ENCODE measurements at regions of chr20 and their contacts with region 1.

Region 1: DNA sequence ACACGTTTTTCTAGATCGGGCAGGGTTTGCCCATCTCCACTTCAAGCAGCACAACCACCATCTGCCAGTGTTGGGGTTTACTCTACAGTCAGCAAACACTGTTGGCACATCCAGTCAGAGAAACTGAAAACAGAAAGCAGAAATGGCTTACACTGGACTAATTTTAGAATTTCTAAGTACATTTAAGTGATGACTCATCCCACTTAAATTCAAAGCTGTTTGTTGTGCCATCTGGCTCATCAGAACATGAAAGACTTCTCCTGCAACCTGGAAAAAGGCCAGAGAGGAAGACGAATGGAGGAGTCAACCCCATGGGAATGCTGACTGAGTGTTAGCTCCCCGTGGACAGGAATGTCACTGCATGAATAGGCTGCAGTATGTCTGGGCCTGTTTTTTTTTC is 21.8 kb downstream of the FAM209B start:
- DNase-seq: peak; percentile 88
- H3K4me3 ChIP-seq: no peak overlapping the region
- H3K27me3 ChIP-seq: peaks cover 3% of the 10 kb centered on the region
- CTCF ChIP-seq: peak; percentile 28; the same call in 1 of the 2 replicates

Region 2: DNA sequence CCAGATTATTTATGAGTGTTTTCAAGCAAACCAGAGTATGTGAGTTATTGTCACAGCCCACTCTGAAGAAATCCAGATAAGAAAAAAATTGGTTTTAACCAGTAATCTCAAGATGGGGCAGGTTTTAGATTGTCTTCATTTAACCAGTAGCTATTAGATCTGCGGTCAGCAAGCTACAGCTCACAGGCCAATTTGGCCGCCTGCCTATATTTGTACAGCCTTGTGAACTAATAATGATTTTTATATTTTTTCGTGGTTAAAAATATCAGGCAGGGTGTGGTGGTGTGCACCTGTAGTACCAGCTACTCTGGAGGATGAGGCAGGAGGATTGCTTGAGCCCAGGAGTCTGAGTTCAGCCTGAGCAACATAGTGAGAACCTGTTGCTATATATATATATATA is 16.9 kb before region 1 on chr20:
- CTCF ChIA-PET with region 1: interaction called, 17 read pairs
- POLR2A ChIA-PET with region 1: no interaction called
- DNase-seq: no peak
- H3K4me3 ChIP-seq: no peak overlapping the region
- H3K27me3 ChIP-seq: no peaks in the 10 kb centered on the region
- CTCF ChIP-seq: no peak

Region 3: DNA sequence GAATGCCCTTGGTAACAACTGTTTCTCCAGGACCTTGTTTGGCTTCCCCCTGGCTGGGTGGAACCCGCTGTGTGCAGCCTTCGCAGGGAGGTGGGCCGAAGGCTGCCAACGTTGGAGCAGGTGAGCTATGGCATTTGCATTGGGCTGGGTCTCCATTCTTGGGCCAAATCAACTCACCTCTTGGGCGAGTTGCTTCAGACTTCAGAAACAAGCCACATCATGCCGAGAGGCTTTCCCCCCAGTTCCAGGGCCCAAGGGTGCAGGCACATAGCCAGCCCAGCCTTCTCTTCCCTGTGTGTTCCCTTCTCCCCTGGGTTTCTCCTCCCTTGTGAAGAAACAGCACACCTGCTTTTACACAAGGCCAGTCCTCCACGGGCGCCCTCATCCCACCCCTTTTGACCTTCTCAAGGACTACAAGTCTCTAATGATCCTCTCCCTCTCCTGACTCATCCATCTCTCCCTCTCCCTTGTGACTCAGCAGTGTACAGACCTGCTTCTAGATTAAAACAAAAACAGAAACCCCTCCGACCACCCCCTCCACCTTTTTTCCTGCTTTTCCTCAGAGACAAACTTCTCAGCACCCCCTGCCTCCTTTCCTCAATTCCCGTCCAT is 19.8 kb after region 1 on chr20:
- CTCF ChIA-PET with region 1: interaction called, 33 read pairs
- POLR2A ChIA-PET with region 1: no interaction called
- DNase-seq: no peak
- H3K4me3 ChIP-seq: no peak overlapping the region
- H3K27me3 ChIP-seq: peaks cover 2% of the 10 kb centered on the region; the same call in 1 of the 2 replicates
- CTCF ChIP-seq: no peak

Region 4: GRCh38 chr20:56629670-56630478 is 75.0 kb after region 1 on chr20:
- CTCF ChIA-PET with region 1: interaction called, 22 read pairs
- POLR2A ChIA-PET with region 1: no interaction called
- DNase-seq: no peak
- H3K4me3 ChIP-seq: peak overlapping the region; percentile 63
- H3K27me3 ChIP-seq: peaks cover 3% of the 10 kb centered on the region; the same call in 1 of the 2 replicates
- CTCF ChIP-seq: peak; percentile 90

Region 5: GRCh38 chr20:56995576-56996075 is 440.8 kb after region 1 on chr20:
- CTCF ChIA-PET with region 1: interaction called, 11 read pairs
- POLR2A ChIA-PET with region 1: no interaction called
- DNase-seq: no peak
- H3K4me3 ChIP-seq: no peak overlapping the region
- H3K27me3 ChIP-seq: 0 out of 2 replicates have a peak, but pooled peaks cover 2% of the 10 kb centered on the region
- CTCF ChIP-seq: peak; percentile 36

Region 6: DNA sequence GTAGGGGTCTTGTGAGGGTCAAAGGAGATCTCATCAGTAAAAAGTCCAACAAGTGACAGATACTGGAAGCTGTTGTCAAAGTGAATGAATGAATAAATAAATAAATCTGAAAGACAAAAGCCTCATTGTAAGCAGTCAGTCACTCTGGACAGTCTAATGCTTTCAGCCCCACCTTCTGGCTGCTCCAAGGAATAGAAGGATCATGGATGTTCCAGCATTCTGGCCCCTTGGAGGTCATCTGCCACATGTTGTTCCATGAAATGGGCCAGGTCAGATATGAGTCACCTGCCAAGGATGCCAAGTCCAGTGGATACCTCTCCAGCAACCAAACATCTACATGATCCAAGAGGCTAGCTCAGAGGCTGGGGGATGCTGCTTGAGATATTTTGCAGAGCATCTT is 525.9 kb after region 1 on chr20:
- CTCF ChIA-PET with region 1: interaction called, 14 read pairs
- POLR2A ChIA-PET with region 1: no interaction called
- DNase-seq: no peak
- H3K4me3 ChIP-seq: no peak overlapping the region
- H3K27me3 ChIP-seq: no peaks in the 10 kb centered on the region
- CTCF ChIP-seq: peak; percentile 48

Measured in BJ (cell line).